Activated T-helper 1 cell treated with anti-CD3 and anti-CD28 coated beads, Interleukin-12 subunit alpha, Interleukin-12 subunit beta, Interleukin-2, Interleukin-4 antibody, amounts not matched to agents 30 ng/mL and 10 ng/mL and 1 ng/mL, durations not matched to agents 14 hours and 24 hours and 36 hours (primary cell): ENCODE measurements at regions of chr21 and their contacts with region 1.

Region 1: DNA sequence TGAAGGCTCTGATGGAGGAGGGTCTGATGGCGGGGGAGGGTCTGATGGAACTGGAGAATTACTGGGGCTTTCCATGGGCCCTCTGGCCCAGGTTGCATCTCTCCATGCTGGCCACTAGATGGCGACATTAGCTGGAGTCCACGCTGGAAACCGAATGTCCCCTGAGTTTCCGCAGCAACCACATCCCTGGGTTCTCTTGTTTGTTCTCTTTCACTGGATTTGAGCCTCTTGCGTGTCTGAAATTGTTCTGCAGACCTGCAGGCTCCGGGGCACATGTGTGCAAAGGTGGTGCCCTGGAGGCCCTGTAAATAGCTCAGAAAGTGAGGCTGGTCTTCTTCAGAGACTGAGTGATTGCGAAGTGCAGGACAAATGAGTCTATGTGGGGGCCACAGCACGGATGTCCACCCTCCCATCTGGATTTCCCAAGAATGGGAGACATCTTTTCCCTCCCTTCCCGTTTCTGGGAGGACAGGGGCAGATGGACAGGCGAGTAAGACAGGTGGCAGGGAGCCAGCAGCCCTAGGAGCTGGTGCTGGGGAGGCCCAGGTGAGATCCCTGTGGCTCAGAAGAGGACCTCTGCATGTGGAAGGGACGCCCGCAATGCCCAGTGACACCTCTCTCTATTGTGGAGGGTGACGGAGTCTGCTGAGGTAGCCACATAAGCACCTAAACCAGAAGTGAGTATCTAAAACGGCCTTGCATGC is 73.2 kb upstream of the ABCG1 start:
- DNase-seq: peak; percentile 55
- H3K4me3 Mint-ChIP-seq: no peak overlapping the region
- H3K27ac Mint-ChIP-seq: peak overlapping the region; percentile 25
- H3K4me1 Mint-ChIP-seq: peaks cover 10% of the 10 kb centered on the region
- H3K27me3 Mint-ChIP-seq: peaks cover 2% of the 10 kb centered on the region

Region 2: DNA sequence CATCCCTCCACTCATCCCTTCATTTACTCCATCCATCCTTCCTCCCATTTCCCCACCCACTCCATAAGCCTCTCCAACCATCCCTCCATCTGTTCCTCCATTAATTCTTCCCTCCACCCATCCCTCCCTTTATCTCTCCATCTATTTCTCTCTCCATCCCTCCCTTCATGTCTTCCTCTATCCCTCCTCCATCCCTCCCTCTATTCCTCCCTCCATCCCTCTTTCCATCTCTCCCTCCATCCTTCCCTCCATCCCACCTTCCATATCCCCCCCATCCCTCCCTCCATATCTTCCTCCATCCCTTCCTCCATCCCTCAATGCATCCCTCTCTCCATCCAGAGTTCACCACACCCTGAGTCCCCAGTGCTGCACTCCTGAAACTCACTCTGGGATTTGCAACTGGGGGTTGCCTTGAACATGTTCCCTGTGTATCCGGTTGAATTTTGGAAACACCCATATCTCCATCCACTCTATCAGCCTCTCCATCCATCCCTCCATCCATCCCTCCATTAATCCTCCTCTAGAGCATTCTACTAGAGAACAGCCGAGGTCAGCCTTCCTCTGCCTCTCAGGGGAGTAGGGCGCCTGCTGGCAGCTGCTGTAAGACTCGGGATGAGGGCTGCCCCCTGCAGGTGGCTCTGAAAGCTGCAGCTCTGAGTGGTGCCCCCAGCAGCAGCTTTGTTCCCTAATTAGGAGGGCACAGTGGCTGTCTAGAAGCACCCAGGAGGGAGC is 112.6 kb after region 1 on chr21:
- intact Hi-C with region 1: loop called (anchors 1 kb)
- DNase-seq: peak; percentile 63
- H3K4me3 Mint-ChIP-seq: no peak overlapping the region
- H3K27ac Mint-ChIP-seq: no peak overlapping the region
- H3K4me1 Mint-ChIP-seq: peaks cover 6% of the 10 kb centered on the region
- H3K27me3 Mint-ChIP-seq: peaks cover 4% of the 10 kb centered on the region

Region 3: GRCh38 chr21:42309753-42310221 is 164.1 kb after region 1 on chr21:
- intact Hi-C with region 1: loop called (anchors 1 kb)
- DNase-seq: peak; percentile 61
- H3K4me3 Mint-ChIP-seq: no peak overlapping the region
- H3K27ac Mint-ChIP-seq: no peak overlapping the region
- H3K4me1 Mint-ChIP-seq: peaks cover 6% of the 10 kb centered on the region
- H3K27me3 Mint-ChIP-seq: peaks cover 18% of the 10 kb centered on the region

Region 4: DNA sequence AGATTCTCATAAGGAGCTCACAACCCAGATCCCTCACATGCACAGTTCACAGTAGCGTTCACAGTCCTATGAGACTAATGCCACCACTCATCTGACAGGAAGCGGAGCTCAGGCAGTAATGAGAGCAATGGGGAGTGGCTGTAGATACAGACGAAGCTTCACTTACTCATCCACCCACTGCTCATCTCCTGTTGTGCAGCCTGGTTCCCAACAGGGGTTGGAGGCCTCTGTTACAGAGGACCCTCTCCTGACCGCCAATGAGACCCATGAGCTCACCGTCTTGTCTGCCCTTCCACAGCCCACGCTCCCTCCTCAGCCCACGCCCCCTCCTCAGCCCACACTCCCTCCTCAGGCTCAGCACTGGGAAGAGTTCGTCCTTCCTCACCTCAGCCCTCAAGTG is 310.7 kb after region 1 on chr21:
- intact Hi-C with region 1: loop called (anchors 5 kb)
- DNase-seq: peak; percentile 33
- H3K4me3 Mint-ChIP-seq: no peak overlapping the region
- H3K27ac Mint-ChIP-seq: peak overlapping the region; percentile 59
- H3K4me1 Mint-ChIP-seq: peaks cover 52% of the 10 kb centered on the region
- H3K27me3 Mint-ChIP-seq: no peaks in the 10 kb centered on the region

Region 5: GRCh38 chr21:42684109-42684916 is 538.6 kb after region 1 on chr21:
- intact Hi-C with region 1: no loop called
- DNase-seq: peak; percentile 48
- H3K4me3 Mint-ChIP-seq: peak overlapping the region; percentile 79
- H3K27ac Mint-ChIP-seq: peak overlapping the region; percentile 97
- H3K4me1 Mint-ChIP-seq: peaks cover 43% of the 10 kb centered on the region
- H3K27me3 Mint-ChIP-seq: no peaks in the 10 kb centered on the region